Activated T-helper 2 cell treated with anti-CD3 and anti-CD28 coated beads, Interferon-gamma antibody, Interleukin-2, Interleukin-4, amounts not matched to agents 10 μg/mL and 5 μg/mL and 100 μg/mL, durations not matched to agents 14 hours and 24 hours and 36 hours (primary cell): ENCODE measurements at regions of chr7 and their contacts with region 1.

Region 1: GRCh38 chr7:23474094-23474828 is 4.0 kb upstream of the IGF2BP3 start:
- DNase-seq: peak; percentile 94
- H3K4me3 Mint-ChIP-seq: peak overlapping the region; percentile 85
- H3K27ac Mint-ChIP-seq: peak overlapping the region; percentile 65
- H3K4me1 Mint-ChIP-seq: peaks cover 35% of the 10 kb centered on the region
- H3K27me3 Mint-ChIP-seq: peaks cover 35% of the 10 kb centered on the region

Region 2: DNA sequence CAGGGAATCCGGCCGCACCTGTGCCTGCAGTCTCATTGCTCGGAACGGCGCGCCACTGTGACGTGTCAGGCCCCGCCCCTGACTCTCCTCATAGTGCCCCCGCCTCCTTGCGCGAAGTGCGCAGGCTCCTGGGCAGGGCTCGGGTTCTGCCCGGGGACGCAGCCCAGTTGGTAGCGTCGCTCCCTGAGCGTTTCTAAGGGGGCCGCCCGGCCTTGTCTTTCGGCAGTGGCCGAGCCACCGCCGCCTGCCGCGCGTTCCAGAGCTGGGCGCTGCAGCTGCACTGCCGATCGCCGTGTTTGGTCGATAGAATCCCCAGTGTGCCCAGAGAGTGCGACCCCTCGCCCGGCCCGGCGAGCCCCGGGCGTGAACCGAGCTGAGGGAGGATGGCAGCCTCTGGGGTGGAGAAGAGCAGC is 368.6 kb before region 1 on chr7 and contains the start of gene KLHL7:
- intact Hi-C with region 1: loop called (anchors 2 kb)
- DNase-seq: peak; percentile 94
- H3K4me3 Mint-ChIP-seq: peak within 1 kb of the TSS; percentile 93
- H3K27ac Mint-ChIP-seq: peak within 1 kb of the TSS; percentile 93
- H3K4me1 Mint-ChIP-seq: peaks cover 30% of the 10 kb centered on the region
- H3K27me3 Mint-ChIP-seq: no peaks in the 10 kb centered on the region
- total RNA-seq, gene KLHL7: 20.2 and 21.6 TPM in 2 replicates

Region 3: GRCh38 chr7:23273141-23273599 is 201.1 kb before region 1 on chr7:
- intact Hi-C with region 1: loop called (anchors 2 kb)
- DNase-seq: peak; percentile 84
- H3K4me3 Mint-ChIP-seq: peak overlapping the region; percentile 55
- H3K27ac Mint-ChIP-seq: peak overlapping the region; percentile 21
- H3K4me1 Mint-ChIP-seq: peaks cover 20% of the 10 kb centered on the region
- H3K27me3 Mint-ChIP-seq: peaks cover 3% of the 10 kb centered on the region

Region 4: DNA sequence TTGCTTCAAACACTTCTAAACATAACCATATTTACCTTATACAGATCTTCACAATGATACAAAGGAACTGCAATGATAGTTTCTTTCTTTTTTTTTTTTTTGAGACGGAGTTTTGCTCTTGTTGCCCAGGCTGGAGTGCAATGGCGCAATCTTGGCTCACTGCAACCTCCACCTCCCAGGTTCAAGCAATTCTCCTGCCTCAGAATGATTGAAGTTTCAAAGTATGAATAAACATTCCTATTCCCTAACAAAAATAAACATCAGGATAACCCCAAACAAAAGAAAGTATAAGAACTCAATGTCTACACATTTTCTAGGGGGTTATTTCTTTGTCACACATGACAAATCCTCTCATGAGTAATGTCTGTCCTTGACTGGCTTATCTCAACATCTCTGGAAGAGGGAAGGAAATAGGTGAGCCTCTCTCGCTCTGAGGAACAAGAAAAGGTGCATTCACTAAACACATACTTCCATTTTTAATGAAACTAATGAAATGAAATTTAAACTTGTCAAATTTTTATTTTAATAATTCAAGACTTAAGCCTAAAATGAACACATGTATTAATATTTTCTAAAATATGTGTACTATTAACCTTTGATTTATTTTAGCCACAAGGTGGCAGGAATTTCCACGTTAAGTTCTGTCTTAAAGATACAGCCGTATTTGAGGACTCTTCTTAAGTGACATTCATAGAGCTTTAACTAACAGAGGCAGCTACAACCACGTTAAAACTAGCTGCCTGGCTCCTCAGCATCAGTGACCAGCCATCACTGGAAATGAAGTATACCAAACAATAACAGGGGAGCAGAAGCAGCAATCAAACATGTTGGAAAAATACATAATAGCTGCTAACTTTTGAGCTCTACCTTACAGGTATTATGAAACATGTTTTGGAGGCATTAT is 116.8 kb before region 1 on chr7:
- intact Hi-C with region 1: loop called (anchors 1 kb)
- DNase-seq: no peak
- H3K4me3 Mint-ChIP-seq: peak overlapping the region; percentile 22
- H3K27ac Mint-ChIP-seq: peak overlapping the region; percentile 83
- H3K4me1 Mint-ChIP-seq: peaks cover 62% of the 10 kb centered on the region
- H3K27me3 Mint-ChIP-seq: no peaks in the 10 kb centered on the region

Region 5: DNA sequence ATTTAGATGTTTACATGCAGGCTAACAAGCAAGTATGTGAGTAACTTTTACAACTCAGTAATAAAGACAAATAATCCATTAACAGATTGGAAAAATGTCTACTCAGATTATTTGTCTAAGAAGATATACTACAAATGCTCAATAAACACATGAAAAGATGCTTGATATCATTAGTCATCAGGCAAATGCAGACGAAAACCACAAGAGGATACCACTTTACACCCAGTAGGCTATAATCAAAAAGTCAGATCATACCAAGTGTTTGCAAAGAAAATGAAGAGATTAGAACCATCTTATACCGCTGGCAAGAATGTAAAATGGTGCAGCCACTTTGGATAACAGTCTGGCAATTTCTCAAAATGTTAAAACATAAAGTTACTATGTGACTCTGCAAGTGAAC is 91.0 kb before region 1 on chr7:
- intact Hi-C with region 1: no loop called
- DNase-seq: no peak
- H3K4me3 Mint-ChIP-seq: no peak overlapping the region
- H3K27ac Mint-ChIP-seq: no peak overlapping the region
- H3K4me1 Mint-ChIP-seq: peaks cover 31% of the 10 kb centered on the region
- H3K27me3 Mint-ChIP-seq: no peaks in the 10 kb centered on the region

Region 6: GRCh38 chr7:23404546-23405239 is 69.6 kb before region 1 on chr7:
- intact Hi-C with region 1: loop called (anchors 2 kb)
- DNase-seq: no peak
- H3K4me3 Mint-ChIP-seq: peak overlapping the region; percentile 14
- H3K27ac Mint-ChIP-seq: peak overlapping the region; percentile 91
- H3K4me1 Mint-ChIP-seq: peaks cover 22% of the 10 kb centered on the region
- H3K27me3 Mint-ChIP-seq: no peaks in the 10 kb centered on the region

Region 7: GRCh38 chr7:23531794-23532489 is 57.7 kb after region 1 on chr7 and contains the start of gene TRA2A:
- intact Hi-C with region 1: loop called (anchors 1 kb)
- DNase-seq: peak; percentile 94
- H3K4me3 Mint-ChIP-seq: peak within 1 kb of the TSS; percentile 97
- H3K27ac Mint-ChIP-seq: peak within 1 kb of the TSS; percentile 99
- H3K4me1 Mint-ChIP-seq: peaks cover 39% of the 10 kb centered on the region
- H3K27me3 Mint-ChIP-seq: no peaks in the 10 kb centered on the region
- total RNA-seq, gene TRA2A: 105 and 115 TPM in 2 replicates